PC-9 (cell line): ENCODE measurements at regions of chr17 and their contacts with region 1.

Region 1: GRCh38 chr17:81659033-81659432 is 2.7 kb upstream of the PDE6G start:
- DNase-seq: peak; percentile 51 to 68
- H3K4me3 ChIP-seq: peak overlapping the region; percentile 15; the same call in 1 of the 2 replicates
- H3K27ac ChIP-seq: peak overlapping the region; percentile 65
- H3K4me1 ChIP-seq: peaks cover 21% of the 10 kb centered on the region
- H3K27me3 ChIP-seq: no peaks in the 10 kb centered on the region
- CTCF ChIP-seq: no peak

Region 2: DNA sequence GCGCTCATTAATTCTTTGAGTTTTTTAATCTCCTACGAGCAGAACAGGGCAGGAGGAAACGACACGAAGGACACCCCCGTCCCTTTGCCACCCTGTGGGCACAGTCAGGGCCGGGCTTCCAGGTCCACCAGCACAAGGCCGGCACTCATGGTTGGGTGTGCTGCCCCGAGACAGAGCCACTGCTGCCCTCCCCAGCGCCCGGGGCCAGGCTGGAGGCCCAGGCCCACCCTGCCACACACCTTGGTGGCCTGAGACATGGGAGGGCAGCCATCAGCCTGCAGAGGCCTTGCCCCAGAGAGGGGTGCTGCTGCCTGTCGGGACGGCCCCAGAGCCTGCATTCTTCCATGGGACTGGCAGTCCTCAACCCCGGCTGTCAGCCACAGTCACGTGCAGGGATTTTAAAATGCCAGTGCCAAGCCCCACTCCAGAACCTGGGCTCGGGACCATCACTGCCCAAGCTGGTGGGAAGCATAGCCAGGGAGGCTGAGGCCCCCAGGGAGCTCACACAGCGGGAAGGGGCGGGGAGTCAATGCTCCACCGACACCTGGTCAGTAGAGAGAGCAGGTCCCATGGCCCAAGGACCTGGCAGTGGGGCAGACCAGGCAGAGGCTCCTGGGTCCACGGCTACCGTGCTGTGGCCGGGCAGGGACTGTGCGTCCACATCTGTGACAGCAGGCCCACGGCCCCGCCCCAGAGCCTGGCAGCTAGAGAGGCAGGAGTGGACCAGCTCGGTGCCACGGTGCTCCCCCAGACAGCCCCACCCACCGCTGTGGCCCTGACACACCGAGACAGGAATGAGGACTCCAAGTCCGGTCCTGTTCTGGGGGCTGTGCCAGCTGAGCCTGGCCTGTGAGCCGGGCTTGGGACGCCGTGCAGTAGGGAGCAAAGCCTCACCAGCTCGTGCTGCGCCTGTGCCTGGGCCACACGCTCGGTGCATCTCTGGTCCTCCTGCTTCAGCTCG is 463.8 kb before region 1 on chr17:
- CTCF ChIA-PET with region 1: no interaction called
- POLR2A ChIA-PET with region 1: interaction called, 12 read pairs
- intact Hi-C with region 1: no loop called
- DNase-seq: no peak
- H3K4me3 ChIP-seq: no peak overlapping the region
- H3K27ac ChIP-seq: no peak overlapping the region
- H3K4me1 ChIP-seq: peaks cover 7% of the 10 kb centered on the region; the same call in 1 of the 2 replicates
- H3K27me3 ChIP-seq: no peaks in the 10 kb centered on the region
- CTCF ChIP-seq: no peak

Region 3: DNA sequence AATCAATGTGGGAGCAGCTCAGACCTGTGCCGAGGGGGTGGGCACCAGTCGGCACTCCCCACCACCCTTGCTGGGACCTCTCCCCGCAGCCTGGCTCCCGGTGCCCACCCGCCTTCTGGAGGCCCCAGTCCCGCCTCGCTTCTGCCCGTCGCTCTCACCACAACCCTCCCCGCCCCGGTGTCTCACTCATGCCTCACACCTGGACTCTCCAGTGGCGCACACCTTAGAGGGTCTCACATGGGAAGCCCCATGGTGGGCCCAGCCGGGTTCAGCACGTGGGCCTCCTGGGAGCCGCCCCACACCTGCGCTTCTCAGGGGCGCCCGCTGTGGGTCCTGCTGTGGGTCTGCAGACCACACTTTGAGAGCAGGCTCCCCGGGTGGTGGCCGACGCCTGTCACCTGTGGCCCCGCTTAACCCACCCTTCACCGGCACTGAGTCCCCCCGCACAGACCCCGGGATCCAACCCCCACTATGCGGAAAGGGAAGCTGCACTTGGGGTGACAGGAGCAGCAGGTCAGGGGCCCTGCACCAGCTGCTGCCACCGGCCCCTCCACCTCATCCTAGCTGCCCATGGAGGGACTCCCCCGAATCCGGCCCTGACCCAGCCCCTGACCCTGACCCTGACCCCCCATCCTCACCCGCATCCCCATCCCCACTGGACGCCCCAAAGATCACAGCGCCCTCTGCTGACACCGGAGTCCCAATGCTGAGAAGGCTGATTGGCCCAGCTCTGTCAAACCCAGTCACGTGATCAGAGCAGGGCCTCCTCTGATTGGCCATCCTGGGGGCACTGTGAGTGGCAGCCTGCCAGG is 336.6 kb before region 1 on chr17:
- CTCF ChIA-PET with region 1: no interaction called
- POLR2A ChIA-PET with region 1: no interaction called
- intact Hi-C with region 1: no loop called
- DNase-seq: no peak
- H3K4me3 ChIP-seq: no peak overlapping the region
- H3K27ac ChIP-seq: no peak overlapping the region
- H3K4me1 ChIP-seq: peaks cover 5% of the 10 kb centered on the region
- H3K27me3 ChIP-seq: no peaks in the 10 kb centered on the region
- CTCF ChIP-seq: peak; percentile 53; the same call in 1 of the 2 replicates

Region 4: GRCh38 chr17:81683584-81684237 is 24.7 kb after region 1 on chr17 and contains the starts of genes ARL16 and HGS:
- CTCF ChIA-PET with region 1: no interaction called
- POLR2A ChIA-PET with region 1: interaction called, 10 read pairs
- intact Hi-C with region 1: no loop called
- DNase-seq: peak; percentile 90 to 99
- H3K4me3 ChIP-seq: peak within 1 kb of the TSS; percentile 93
- H3K27ac ChIP-seq: peak within 1 kb of the TSS; percentile 78
- H3K4me1 ChIP-seq: peaks cover 5% of the 10 kb centered on the region
- H3K27me3 ChIP-seq: no peaks in the 10 kb centered on the region
- CTCF ChIP-seq: no peak
- total RNA-seq, gene ARL16: 41.7 and 48.3 TPM in 2 replicates
- total RNA-seq, gene HGS: 149 and 166 TPM in 2 replicates